ENCODE measurements at regions of chr20 and their contacts with region 1.

Region 1: DNA sequence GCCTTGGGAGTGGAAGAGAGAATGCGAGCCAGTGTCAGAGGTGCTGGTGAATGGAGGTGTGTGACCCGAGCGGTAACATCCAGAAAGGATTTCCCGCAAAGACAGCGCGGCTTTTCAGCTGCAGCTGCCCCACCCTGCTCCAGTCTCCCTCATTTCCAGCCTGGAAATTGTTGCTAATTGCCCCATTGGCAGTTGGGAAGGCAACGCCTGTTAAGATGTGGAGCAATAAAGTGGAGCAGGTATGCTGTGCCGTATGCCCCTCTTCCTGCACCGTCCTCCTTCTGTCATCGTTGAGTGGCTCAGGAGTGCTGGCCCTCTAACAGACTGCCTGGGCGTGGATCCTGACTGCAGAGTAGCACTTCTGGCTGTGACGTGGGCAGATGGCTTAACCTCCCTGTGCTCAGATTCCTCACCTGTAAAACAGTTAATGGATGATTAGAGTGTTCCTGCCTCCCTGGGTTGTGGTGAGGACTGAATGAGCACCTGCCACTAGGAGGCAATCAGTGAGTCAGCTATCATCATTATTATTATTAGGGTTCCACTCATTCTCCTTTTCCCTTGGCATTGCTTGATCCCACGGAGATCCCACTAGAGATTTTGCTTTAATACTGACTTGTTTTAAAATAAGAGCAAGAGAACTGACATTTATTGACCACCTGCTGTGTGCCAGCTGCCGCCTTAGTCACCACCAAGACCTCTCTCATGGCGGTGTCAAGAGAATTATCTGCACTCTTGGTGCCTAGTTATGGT is 11.7 kb downstream of the ARFGEF2 start:
- DNase-seq: no peak
- H3K4me3 ChIP-seq: no peak overlapping the region
- H3K27ac ChIP-seq: no peak overlapping the region
- H3K27me3 ChIP-seq: no peaks in the 10 kb centered on the region
- CTCF ChIP-seq: no peak

Region 2: DNA sequence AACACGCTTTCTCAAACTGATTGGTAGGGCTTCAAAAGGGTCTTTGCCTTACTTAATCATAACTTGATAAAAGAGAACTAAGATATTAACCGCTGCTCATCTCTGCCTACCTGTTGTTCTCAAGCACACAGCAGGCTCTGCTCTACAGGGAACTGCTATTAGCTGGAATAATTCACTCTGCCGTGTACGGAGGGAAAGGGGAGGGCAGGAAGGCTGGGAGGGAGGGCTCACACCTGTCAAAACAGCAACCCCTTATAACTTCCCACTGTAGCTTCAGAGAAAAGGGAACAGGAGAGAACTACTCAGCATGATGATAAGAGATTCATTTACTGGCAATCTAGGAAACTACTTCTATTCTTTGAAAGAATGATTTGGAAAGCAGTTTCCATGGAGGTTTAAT is 1651.8 kb before region 1 on chr20:
- CTCF ChIA-PET with region 1: no interaction called
- POLR2A ChIA-PET with region 1: interaction called, 10 read pairs
- DNase-seq: no peak
- H3K4me3 ChIP-seq: no peak overlapping the region
- H3K27ac ChIP-seq: no peak overlapping the region
- H3K27me3 ChIP-seq: no peaks in the 10 kb centered on the region
- CTCF ChIP-seq: no peak

Region 3: DNA sequence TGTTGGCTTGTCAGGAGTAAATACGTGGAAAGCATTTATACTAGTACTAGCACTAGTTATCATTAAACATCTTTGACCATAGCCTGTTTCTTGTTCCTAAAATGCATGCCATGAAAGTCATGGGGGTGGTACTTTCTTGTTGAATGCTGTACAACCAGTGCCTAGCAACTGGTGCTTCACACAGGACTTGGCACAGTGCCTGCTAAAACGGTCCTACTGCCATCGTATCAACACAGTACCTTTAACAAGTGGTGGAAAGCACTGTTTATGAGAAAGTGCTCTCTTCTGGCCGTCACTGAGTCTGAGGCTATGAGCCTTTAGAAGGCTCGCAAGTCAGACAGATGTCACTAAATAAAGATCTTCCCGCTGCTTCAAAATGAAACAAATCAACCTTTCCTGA is 323.1 kb after region 1 on chr20:
- CTCF ChIA-PET with region 1: no interaction called
- POLR2A ChIA-PET with region 1: no interaction called
- DNase-seq: no peak
- H3K4me3 ChIP-seq: no peak overlapping the region
- H3K27ac ChIP-seq: no peak overlapping the region
- H3K27me3 ChIP-seq: no peaks in the 10 kb centered on the region
- CTCF ChIP-seq: no peak